ENCODE measurements at regions of chr4 and their contacts with region 1.

Region 1: DNA sequence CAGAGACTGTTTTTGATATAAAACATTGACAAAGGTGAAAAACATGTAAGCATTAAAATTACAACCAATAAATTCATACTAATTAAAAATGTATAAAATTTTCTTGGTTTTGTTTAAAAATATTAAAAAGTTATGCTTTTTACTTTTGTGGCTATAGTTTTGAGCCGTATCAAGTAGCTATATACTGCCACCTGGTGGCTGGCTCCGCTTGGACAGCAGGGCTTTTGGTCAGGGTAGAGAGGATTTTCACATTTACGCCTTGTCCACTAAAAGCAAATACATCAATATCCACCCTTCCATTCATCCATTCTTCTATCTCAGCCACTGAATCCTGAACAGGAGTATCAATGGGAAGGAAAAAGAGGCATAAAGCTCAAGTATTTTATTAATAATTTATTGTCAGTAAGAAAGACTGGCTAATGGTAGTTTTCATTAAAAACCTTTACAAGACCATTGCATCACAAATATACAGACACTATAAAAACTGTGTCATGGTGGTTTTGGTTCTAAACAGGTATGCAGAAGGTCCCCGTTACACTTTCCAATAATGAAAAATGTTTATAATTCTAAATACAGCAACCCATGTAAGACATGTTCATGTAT is 32.1 kb upstream of the MTNR1A start:
- H3K4me3 ChIP-seq: no peak overlapping the region
- H3K27ac ChIP-seq: no peak overlapping the region
- H3K4me1 ChIP-seq: no peaks in the 10 kb centered on the region
- CTCF ChIP-seq: no peak

Region 2: GRCh38 chr4:186132577-186133242 is 454.8 kb before region 1 on chr4:
- CTCF ChIA-PET with region 1: no interaction called
- POLR2A ChIA-PET with region 1: no interaction called
- H3K4me3 ChIP-seq: no peak overlapping the region
- H3K27ac ChIP-seq: no peak overlapping the region
- H3K4me1 ChIP-seq: no peaks in the 10 kb centered on the region
- CTCF ChIP-seq: 0 out of 2 replicates have a peak, but pooled peaks have one; percentile 11

Region 3: GRCh38 chr4:186297013-186297645 is 290.4 kb before region 1 on chr4:
- CTCF ChIA-PET with region 1: interaction called, 16 read pairs
- POLR2A ChIA-PET with region 1: no interaction called
- H3K4me3 ChIP-seq: no peak overlapping the region
- H3K27ac ChIP-seq: no peak overlapping the region
- H3K4me1 ChIP-seq: no peaks in the 10 kb centered on the region
- CTCF ChIP-seq: no peak; the same call in 1 of the 2 replicates

Region 4: GRCh38 chr4:186472948-186473347 is 114.6 kb before region 1 on chr4:
- CTCF ChIA-PET with region 1: interaction called, 27 read pairs
- POLR2A ChIA-PET with region 1: no interaction called
- H3K4me3 ChIP-seq: no peak overlapping the region
- H3K27ac ChIP-seq: no peak overlapping the region
- H3K4me1 ChIP-seq: no peaks in the 10 kb centered on the region
- CTCF ChIP-seq: 0 out of 2 replicates have a peak, but pooled peaks have one; percentile 6

Region 5: DNA sequence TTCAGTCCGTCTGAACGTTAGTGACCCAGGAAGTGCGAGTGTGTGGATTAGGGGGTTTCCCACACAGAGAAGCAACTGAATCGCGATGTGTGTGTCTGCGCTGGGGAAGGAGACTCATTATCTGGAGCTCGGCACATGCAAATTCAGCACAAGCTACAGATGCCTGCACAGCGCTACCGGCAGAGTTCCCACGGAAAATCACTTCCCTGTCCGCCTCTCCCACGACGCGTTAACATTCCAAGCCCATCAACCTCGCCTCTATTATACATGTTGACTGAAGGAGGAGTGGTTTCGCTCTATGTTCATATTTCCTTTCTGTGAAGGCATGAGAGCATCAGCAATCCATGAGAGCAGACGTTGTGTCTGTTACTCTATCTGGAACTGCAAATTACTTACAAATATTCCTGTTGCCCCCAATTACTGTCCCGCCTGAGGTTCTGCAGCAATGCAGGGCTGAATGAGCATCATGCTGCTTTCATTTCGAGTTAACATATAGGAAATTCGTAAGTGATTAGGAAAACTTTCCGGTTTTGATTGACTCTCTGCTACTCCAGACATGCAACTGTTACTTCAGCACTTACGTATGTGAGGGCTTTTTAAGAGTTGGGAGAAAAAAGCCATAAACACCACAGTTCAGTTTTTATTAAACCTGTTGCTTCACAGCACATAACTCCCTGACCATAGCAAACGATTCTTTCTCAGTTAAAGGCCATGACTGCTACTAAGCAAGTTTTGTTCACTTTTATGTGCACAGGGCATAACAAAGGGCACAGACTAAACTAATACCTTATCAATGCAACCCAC is 17.1 kb before region 1 on chr4:
- CTCF ChIA-PET with region 1: interaction called, 21 read pairs
- POLR2A ChIA-PET with region 1: no interaction called
- H3K4me3 ChIP-seq: no peak overlapping the region
- H3K27ac ChIP-seq: no peak overlapping the region
- H3K4me1 ChIP-seq: no peaks in the 10 kb centered on the region
- CTCF ChIP-seq: no peak